Activated CD4-positive, alpha-beta T cell treated with anti-CD3 and anti-CD28 coated beads for 36 hours (primary cell): ENCODE measurements at regions of chr6 and their contacts with region 1.

Region 1: GRCh38 chr6:21593412-21593926 is at the start of gene SOX4:
- DNase-seq: peak; percentile 82
- ATAC-seq: peak; percentile 67
- H3K4me3 Mint-ChIP-seq: no peak within 1 kb of the TSS
- H3K27ac Mint-ChIP-seq: peak within 1 kb of the TSS; percentile 77
- H3K4me1 Mint-ChIP-seq: peaks cover 21% of the 10 kb centered on the region
- H3K27me3 Mint-ChIP-seq: peaks cover 37% of the 10 kb centered on the region
- total RNA-seq, gene SOX4: 2.3 to 2.5 TPM

Region 2: DNA sequence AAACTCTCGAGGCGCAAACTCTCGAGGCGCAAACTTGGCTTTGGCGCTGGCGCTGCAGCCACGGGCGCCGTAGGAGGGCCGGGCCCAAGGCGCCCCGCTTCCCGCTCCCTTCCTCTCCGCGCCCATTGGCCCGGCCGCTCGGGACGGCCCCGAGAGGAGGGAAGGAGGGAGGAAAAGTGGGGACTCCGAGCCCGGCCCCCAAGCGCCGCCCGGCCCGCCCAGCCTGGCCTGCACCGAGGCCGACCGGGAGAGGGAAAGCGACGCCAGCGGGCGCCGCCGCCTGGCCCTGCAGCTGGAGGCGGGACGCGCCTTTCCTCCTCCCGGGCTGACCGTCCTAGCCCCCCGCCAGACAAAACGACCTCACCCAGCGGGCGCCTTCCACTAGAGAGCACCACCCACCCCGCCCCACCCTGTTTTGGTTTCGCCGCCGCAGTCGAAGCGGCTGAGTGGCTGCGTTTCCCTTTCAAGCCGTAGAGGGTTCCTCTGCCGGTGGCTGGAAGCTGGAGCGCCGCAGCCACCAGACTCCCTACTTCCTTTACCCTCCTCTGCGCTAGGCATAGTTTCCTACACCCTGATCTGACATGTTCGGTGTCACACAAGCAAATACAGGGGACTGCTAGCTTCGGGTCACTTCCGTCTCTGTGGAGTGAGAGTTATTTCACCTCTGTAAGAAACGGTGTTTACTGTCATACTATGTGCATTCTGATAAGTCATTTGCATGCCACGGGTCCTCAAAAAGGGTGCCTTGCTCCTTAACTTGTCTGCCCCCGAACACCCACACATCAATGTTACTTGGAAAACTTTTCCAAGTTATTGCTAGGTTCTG is 1380.9 kb before region 1 on chr6 and contains the start of gene MBOAT1:
- CTCF ChIA-PET with region 1: no interaction called
- POLR2A ChIA-PET with region 1: no interaction called
- intact Hi-C with region 1: loop called in 1 of 2 experiments (anchors 5 kb)
- DNase-seq: peak; percentile 85
- ATAC-seq: peak; percentile 89
- H3K4me3 Mint-ChIP-seq: peak within 1 kb of the TSS; percentile 95
- H3K27ac Mint-ChIP-seq: peak within 1 kb of the TSS; percentile 97
- H3K4me1 Mint-ChIP-seq: peaks cover 37% of the 10 kb centered on the region
- H3K27me3 Mint-ChIP-seq: no peaks in the 10 kb centered on the region
- total RNA-seq, gene MBOAT1: 13.3 to 16.1 TPM

Region 3: GRCh38 chr6:20534295-20535262 is 1058.9 kb before region 1 on chr6 and contains the start of gene CDKAL1:
- CTCF ChIA-PET with region 1: interaction called, 4 read pairs
- POLR2A ChIA-PET with region 1: no interaction called
- intact Hi-C with region 1: loop called in 1 of 2 experiments (anchors 1 kb)
- DNase-seq: peak; percentile 94
- ATAC-seq: peak; percentile 89
- H3K4me3 Mint-ChIP-seq: peak within 1 kb of the TSS; percentile 94
- H3K27ac Mint-ChIP-seq: peak within 1 kb of the TSS; percentile 97
- H3K4me1 Mint-ChIP-seq: peaks cover 36% of the 10 kb centered on the region
- H3K27me3 Mint-ChIP-seq: no peaks in the 10 kb centered on the region
- total RNA-seq, gene CDKAL1: 22.1 to 23.4 TPM

Region 4: DNA sequence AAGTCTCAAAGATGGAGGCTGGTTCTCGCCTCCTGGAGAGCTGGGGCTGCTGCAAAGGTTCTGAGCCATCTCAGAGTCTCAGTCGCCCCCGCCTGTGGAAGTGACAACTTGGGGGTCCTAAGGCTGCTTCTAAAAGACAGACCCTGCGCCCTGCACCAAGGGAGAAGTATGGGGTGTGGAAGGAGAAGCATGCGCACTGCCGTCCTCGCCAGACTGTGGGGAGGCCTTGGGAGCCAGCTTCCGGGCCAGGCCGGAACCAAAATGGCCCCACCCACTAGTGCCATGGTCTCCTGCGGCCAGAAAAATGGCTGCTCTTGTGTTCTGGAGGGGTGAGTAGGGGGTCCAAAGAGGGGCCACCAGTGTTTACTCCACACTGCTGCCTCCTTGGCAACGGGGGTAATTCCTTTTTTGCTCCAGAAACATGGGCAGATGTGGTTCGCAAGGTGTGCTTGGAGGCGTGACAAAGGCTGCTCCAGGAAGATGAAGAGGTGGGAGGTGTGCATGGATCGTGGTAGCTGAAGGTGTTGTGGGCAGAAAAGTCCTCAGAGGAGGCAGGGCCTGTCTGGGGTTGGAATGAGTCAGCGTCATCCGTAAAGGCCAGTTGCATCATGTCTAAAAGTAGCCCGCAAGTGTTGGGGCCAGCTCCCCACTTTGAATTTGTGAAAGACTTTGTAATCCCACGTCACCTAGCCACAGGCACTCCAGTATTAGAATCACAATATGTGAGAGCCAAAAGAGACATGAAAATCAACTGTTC is 329.8 kb before region 1 on chr6:
- CTCF ChIA-PET with region 1: interaction called, 3 read pairs
- POLR2A ChIA-PET with region 1: no interaction called
- intact Hi-C with region 1: loop called in 1 of 2 experiments (anchors 5 kb)
- DNase-seq: peak; percentile 34
- ATAC-seq: no peak
- H3K4me3 Mint-ChIP-seq: no peak overlapping the region
- H3K27ac Mint-ChIP-seq: no peak overlapping the region
- H3K4me1 Mint-ChIP-seq: peaks cover 22% of the 10 kb centered on the region
- H3K27me3 Mint-ChIP-seq: peaks cover 6% of the 10 kb centered on the region

Region 5: DNA sequence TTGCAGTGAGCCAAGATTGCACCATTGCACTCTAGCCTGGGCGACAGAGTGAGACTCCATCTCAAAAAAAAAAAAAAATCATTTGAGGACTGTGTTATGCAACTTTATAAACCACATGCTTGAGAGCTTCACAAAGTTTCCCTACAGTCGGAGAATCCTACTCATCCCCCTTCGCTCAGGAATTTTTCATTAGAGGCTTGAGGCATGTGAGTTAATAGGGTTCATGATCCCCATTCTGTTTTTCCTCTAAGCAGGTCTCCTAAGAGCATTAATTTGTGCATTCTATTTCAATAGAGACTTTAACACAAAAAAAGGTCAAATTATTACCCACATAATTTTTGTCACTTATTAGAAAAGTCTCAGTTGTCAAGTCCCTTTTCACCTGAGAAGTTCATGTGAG is 103.6 kb before region 1 on chr6:
- CTCF ChIA-PET with region 1: no interaction called
- POLR2A ChIA-PET with region 1: no interaction called
- intact Hi-C with region 1: no loop called
- DNase-seq: no peak
- ATAC-seq: no peak
- H3K4me3 Mint-ChIP-seq: no peak overlapping the region
- H3K27ac Mint-ChIP-seq: no peak overlapping the region
- H3K4me1 Mint-ChIP-seq: no peaks in the 10 kb centered on the region
- H3K27me3 Mint-ChIP-seq: no peaks in the 10 kb centered on the region

Region 6: GRCh38 chr6:21935561-21936028 is 342.1 kb after region 1 on chr6:
- CTCF ChIA-PET with region 1: no interaction called
- POLR2A ChIA-PET with region 1: no interaction called
- intact Hi-C with region 1: loop called (anchors 2 kb)
- DNase-seq: peak; percentile 60
- ATAC-seq: peak; percentile 51
- H3K4me3 Mint-ChIP-seq: no peak overlapping the region
- H3K27ac Mint-ChIP-seq: no peak overlapping the region
- H3K4me1 Mint-ChIP-seq: no peaks in the 10 kb centered on the region
- H3K27me3 Mint-ChIP-seq: no peaks in the 10 kb centered on the region

Region 7: DNA sequence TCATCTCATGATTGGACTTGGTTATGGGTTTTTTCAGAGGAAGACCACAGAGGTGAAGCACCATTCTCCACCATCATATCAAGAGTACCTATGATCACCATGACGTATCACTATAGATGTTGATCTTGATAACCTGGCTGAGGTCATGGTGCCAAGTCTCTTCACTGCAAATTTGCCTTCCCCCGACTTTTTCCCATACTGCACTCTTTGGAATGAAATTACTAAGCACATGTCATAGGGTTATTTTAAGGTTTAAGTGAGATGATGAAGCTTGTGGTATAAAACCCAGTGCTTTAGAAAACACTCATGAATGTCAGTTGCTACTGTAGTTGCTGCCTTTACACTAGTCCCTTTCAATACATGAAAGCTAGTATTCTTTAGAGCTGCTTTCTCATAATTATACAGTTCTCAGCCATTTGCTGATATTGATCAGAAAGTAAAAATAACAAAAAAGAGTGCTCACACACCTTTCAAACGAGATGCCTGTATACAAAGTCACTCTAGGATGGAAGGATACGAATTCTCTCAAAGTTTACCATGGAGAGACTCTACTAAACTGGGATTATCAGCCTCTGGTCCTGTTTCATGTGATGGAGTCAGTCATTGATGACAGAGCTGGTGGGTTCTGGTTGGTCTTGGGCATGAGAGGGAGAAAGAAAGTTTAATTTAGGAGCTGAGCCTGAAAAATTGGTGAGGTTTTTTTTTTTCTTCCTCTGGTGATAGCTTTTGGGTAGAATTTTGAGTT is 475.3 kb after region 1 on chr6:
- CTCF ChIA-PET with region 1: no interaction called
- POLR2A ChIA-PET with region 1: no interaction called
- intact Hi-C with region 1: loop called (anchors 2 to 5 kb)
- DNase-seq: peak; percentile 59
- ATAC-seq: peak; percentile 90
- H3K4me3 Mint-ChIP-seq: peak overlapping the region; percentile 11
- H3K27ac Mint-ChIP-seq: peak overlapping the region; percentile 81
- H3K4me1 Mint-ChIP-seq: peaks cover 32% of the 10 kb centered on the region
- H3K27me3 Mint-ChIP-seq: peaks cover 10% of the 10 kb centered on the region